BJ (cell line): ENCODE measurements at regions of chr19 and their contacts with region 1.

Region 1: DNA sequence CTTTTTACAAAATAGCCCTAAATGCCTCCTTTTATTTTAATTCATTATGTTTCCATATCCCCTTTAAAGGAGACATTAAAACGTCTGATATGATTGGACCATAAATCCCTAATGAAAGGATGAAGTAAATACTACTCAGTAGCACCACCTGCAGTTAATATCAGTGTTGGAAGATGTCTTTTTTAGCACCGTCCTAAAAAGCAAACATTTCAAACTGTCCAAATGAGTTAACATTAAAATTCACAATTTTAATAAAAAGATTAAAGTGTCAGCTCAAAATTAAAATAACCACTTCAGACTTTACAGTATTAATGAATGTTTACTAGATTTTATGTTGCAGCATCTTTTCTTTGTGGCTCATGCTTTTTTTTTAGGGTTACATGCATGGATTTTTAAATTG is 12.3 kb downstream of the ZNF507 start:
- DNase-seq: no peak
- H3K4me3 ChIP-seq: no peak overlapping the region
- H3K27me3 ChIP-seq: no peaks in the 10 kb centered on the region
- CTCF ChIP-seq: 0 out of 2 replicates have a peak, but pooled peaks have one; percentile 15

Region 2: GRCh38 chr19:32367948-32368536 is 10.3 kb after region 1 on chr19:
- CTCF ChIA-PET with region 1: interaction called, 18 read pairs
- POLR2A ChIA-PET with region 1: interaction called, 3 read pairs
- DNase-seq: no peak
- H3K4me3 ChIP-seq: no peak overlapping the region
- H3K27me3 ChIP-seq: no peaks in the 10 kb centered on the region
- CTCF ChIP-seq: no peak